MCF 10A (cell line): ENCODE measurements at regions of chr3 and their contacts with region 1.

Region 1: DNA sequence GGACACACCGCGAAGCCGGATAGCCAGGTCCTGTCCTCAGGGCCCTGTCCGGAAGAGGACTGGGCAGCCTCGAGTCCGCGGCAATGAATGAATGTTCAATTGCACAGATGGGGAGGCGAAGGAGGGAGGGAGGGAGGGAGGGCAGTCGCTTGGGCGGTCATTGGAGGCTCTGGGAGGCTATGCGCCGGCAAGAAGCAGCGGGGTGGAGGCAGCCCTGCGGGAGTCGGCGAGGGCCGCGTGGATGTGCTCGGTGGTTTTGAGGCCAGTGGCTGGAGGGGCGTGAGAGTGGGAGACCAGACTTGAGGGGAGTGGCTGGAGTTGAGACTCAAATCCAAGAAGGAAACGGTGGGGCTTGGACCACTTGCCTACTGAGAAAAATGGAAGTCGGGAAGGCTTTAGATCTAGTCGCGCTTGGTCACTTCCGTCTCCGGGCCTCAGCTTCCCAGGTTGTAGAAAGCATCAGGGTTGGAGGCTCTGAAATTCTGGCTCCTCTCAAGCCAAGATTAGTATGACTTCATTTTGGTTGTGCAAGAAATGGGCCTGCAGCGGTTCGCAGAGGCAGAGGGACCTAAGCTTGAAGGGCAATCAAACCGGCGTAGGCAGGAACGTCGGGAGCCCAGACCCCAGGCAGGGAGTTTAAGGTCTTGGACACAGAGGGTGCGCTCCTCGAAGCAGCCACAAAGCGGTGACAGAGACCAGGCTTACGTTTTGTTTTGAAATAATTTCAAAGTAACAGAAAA is 21.1 kb upstream of the PLXND1 start:
- DNase-seq: peak; percentile 92
- H3K4me3 Mint-ChIP-seq: peak overlapping the region; percentile 71
- H3K27ac Mint-ChIP-seq: peak overlapping the region; percentile 74
- H3K4me1 Mint-ChIP-seq: peaks cover 20% of the 10 kb centered on the region
- H3K27me3 Mint-ChIP-seq: no peaks in the 10 kb centered on the region
- CTCF ChIP-seq: peak; percentile 63

Region 2: GRCh38 chr3:129756871-129757270 is 129.3 kb after region 1 on chr3:
- CTCF ChIA-PET with region 1: no interaction called
- POLR2A ChIA-PET with region 1: no interaction called
- intact Hi-C with region 1: no loop called
- DNase-seq: no peak
- H3K4me3 Mint-ChIP-seq: no peak overlapping the region
- H3K27ac Mint-ChIP-seq: no peak overlapping the region
- H3K4me1 Mint-ChIP-seq: peaks cover 7% of the 10 kb centered on the region
- H3K27me3 Mint-ChIP-seq: no peaks in the 10 kb centered on the region
- CTCF ChIP-seq: no peak

Region 3: DNA sequence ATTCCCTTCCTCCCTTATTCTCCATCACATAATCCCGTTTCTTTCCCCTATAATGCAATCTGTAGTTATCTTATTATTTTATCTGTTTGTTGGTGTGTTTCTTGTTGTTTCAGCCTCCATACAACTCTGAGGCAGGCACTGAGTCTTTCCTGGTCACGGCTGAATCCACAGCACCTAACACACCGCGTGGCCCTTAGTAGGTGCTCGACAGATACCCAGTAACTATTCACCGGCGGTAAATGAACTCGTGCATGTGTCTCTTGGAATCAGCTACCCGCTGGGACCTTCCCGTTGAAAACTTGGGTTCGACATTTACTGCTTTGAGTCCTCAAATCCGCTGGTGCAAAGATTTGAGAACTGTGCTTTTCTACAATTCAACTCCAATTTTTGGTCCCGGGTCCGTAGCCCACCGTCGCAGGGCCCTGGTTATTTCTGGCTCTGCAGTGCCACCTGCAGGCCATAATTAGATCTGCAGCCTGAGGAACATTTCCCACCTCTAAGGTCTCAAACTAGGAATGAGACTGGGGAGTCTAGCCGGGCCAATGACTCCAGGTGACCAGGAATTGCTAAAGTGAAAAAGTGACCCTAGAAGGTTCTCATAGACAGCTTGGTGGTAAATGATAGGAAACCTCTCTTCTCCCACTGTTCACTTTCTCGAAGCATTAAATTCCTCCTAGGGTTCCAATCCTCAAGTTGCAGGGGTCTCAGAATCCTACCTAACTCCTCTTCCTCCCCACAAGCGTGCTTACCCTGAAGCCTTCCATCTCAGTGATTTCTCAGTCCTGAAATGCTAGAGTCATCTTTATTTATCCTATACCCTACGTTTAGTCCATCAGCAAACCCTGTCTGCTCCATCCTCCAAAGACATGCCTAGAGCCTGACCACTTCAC is 306.9 kb after region 1 on chr3:
- CTCF ChIA-PET with region 1: interaction called, 5 read pairs
- POLR2A ChIA-PET with region 1: no interaction called
- intact Hi-C with region 1: loop called (anchors 1 kb)
- DNase-seq: peak; percentile 51
- H3K4me3 Mint-ChIP-seq: peak overlapping the region; percentile 42
- H3K27ac Mint-ChIP-seq: no peak overlapping the region
- H3K4me1 Mint-ChIP-seq: peaks cover 17% of the 10 kb centered on the region
- H3K27me3 Mint-ChIP-seq: no peaks in the 10 kb centered on the region
- CTCF ChIP-seq: peak; percentile 81

Region 4: GRCh38 chr3:129994883-129995559 is 367.4 kb after region 1 on chr3:
- CTCF ChIA-PET with region 1: interaction called, 5 read pairs
- POLR2A ChIA-PET with region 1: no interaction called
- intact Hi-C with region 1: loop called (anchors 5 kb)
- DNase-seq: peak; percentile 46
- H3K4me3 Mint-ChIP-seq: no peak overlapping the region
- H3K27ac Mint-ChIP-seq: no peak overlapping the region
- H3K4me1 Mint-ChIP-seq: no peaks in the 10 kb centered on the region
- H3K27me3 Mint-ChIP-seq: peaks cover 50% of the 10 kb centered on the region
- CTCF ChIP-seq: no peak

Region 5: DNA sequence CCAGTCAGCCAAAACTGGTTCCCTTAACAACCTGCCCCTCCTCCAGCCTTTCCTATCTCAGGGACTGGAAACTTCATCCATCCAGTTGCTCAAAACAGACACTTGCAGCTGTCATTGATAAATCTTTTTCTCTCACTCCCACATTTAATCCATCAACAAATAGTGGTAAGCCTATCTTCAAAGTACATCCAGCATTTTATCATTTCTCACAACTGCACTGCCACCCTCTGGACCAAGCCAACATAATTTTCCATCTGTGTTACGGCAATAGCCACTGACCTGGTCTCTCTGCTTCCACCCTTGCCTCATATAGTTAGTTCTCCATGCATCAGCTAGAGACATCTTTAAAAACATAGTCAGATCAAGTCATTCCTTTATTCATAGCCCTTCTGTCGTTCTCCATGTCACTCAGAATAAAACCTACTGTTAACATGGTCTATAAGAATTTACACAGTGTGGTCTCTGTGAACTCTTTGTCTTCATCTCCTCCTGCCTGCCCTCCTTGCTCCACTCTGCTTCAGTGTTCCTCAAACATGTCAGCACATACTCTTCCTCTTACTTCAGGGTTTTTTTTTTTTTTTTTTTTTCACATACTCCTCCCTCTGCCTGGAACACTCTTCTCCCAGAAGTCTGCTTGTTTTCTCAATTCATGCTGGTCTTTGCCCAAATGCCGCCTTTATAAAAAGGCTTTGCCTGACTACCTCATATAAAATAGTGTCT is 615.4 kb after region 1 on chr3:
- CTCF ChIA-PET with region 1: no interaction called
- POLR2A ChIA-PET with region 1: no interaction called
- intact Hi-C with region 1: no loop called
- DNase-seq: peak; percentile 7
- H3K4me3 Mint-ChIP-seq: no peak overlapping the region
- H3K27ac Mint-ChIP-seq: no peak overlapping the region
- H3K4me1 Mint-ChIP-seq: no peaks in the 10 kb centered on the region
- H3K27me3 Mint-ChIP-seq: peaks cover 9% of the 10 kb centered on the region
- CTCF ChIP-seq: no peak